Vagina (tissue), 2 donors: ENCODE measurements at regions of chr7 and their contacts with region 1.

Region 1: DNA sequence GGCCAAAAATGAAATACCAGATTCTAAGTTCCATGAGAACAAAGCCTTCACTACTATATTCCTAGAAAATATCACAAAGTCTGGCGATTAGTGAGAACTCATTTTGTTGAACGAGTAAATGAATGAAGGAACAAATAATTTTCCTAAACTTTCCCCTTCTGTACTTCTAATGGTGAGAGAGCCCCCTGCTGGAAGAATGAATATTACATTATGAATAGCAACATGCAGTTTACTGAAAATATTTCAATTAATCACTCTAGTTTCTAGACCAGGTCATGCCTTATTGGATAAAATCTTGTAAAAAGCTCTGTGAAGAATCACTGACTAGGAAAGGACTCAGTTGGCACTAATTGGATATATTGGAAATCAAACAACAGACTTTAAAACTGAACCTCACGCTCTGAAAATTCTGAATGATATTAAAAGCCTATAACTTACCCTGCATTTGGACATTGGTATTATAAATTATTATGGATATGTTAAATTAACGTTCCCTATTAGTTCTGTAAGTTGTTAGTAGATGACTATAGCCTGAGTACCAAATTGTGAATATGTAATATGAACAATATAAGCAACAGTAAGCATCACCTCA is 32.4 kb upstream of the MTPN start:
- DNase-seq: no peak
- H3K4me3 ChIP-seq: no peak overlapping the region
- H3K27ac ChIP-seq: no peak overlapping the region
- H3K4me1 ChIP-seq: no peaks in the 10 kb centered on the region
- H3K27me3 ChIP-seq: no peaks in the 10 kb centered on the region
- CTCF ChIP-seq: peak; percentile 60 to 86 (median 85)
- POLR2A ChIP-seq: no peak

Region 2: DNA sequence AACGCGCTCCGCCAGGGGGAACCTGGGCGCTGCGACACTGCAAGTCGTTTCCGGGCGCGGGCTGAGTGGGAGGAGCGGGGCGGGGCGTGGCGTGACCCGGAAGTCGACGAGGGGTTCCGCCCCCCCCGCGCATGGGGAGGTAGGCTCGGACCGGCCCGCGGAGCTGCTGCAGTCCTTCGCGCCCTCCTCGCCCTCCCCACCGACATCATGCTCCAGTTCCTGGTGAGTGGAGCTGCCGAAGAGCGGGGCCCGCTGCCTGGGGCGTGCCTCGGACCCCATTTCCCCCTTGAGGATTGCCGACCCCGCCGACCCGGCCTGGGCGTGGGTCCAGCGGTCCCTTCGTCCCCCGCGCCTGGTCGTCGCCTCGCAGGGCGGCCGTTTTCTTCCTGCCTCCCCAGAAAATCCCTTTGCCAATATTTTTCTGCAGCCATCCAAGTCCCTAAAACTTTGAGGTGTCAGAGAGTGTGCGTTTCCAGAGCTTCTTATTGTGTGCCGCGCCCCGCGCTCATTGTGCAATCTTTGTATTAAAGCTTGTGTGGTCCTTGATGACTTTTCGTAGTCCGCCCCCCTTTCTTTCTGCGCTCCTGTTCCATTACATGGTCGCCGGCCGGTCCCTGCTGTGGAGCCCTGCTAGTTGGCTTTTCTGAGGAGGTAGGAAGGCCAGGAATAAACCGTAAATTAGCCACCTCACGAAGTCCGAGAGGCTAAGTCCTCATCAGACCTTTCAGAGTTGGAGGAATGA is 347.0 kb before region 1 on chr7 and contains the start of gene STMP1:
- intact Hi-C with region 1: loop called (anchors 10 kb)
- DNase-seq: peak in 1 of 2 donors; percentile 96
- H3K4me3 ChIP-seq: peak within 1 kb of the TSS; percentile 91 to 96
- H3K27ac ChIP-seq: peak within 1 kb of the TSS; percentile 86
- H3K4me1 ChIP-seq: peaks cover 30% of the 10 kb centered on the region
- H3K27me3 ChIP-seq: no peaks in the 10 kb centered on the region
- CTCF ChIP-seq: peak in 1 of 3 experiments; percentile 80
- POLR2A ChIP-seq: peak in 1 of 2 donors; percentile 81
- total RNA-seq, gene STMP1: 13.5 TPM

Region 3: GRCh38 chr7:135801045-135801693 is 208.4 kb before region 1 on chr7:
- intact Hi-C with region 1: loop called (anchors 5 kb)
- DNase-seq: peak in 1 of 2 donors; percentile 22
- H3K4me3 ChIP-seq: no peak overlapping the region
- H3K27ac ChIP-seq: no peak overlapping the region
- H3K4me1 ChIP-seq: peaks cover 12% of the 10 kb centered on the region
- H3K27me3 ChIP-seq: no peaks in the 10 kb centered on the region
- CTCF ChIP-seq: peak; percentile 64 to 71 (median 71)
- POLR2A ChIP-seq: no peak